ENCODE measurements at regions of chr7 and their contacts with region 1.

Region 1: GRCh38 chr7:38398725-38399321 is 125.4 kb upstream of the TARP start:
- DNase-seq: peak; percentile 15 to 50
- ATAC-seq: peak in 3 of 8 donors; percentile 42 to 68 (median 62)
- H3K4me3 ChIP-seq: no peak overlapping the region
- H3K27ac ChIP-seq: no peak overlapping the region
- H3K4me1 ChIP-seq: peaks cover 0 to 12% (median 0%) of the 10 kb centered on the region in 9 donors
- H3K27me3 ChIP-seq: no peaks in the 10 kb centered on the region
- CTCF ChIP-seq: peak; percentile 76 to 94 (median 92)

Region 2: GRCh38 chr7:38360776-38361175 is 38.0 kb before region 1 on chr7:
- intact Hi-C with region 1: no loop called
- DNase-seq: no peak
- ATAC-seq: no peak
- H3K4me3 ChIP-seq: peak overlapping the region in 1 of 10 donors; percentile 36
- H3K27ac ChIP-seq: no peak overlapping the region
- H3K4me1 ChIP-seq: peaks cover 0 to 20% (median 0%) of the 10 kb centered on the region in 9 donors
- H3K27me3 ChIP-seq: no peaks in the 10 kb centered on the region
- CTCF ChIP-seq: no peak

Region 3: GRCh38 chr7:38492010-38492409 is 93.2 kb after region 1 on chr7:
- intact Hi-C with region 1: no loop called
- DNase-seq: no peak
- ATAC-seq: no peak
- H3K4me3 ChIP-seq: no peak overlapping the region
- H3K27ac ChIP-seq: no peak overlapping the region
- H3K4me1 ChIP-seq: no peaks in the 10 kb centered on the region
- H3K27me3 ChIP-seq: no peaks in the 10 kb centered on the region
- CTCF ChIP-seq: no peak

Region 4: DNA sequence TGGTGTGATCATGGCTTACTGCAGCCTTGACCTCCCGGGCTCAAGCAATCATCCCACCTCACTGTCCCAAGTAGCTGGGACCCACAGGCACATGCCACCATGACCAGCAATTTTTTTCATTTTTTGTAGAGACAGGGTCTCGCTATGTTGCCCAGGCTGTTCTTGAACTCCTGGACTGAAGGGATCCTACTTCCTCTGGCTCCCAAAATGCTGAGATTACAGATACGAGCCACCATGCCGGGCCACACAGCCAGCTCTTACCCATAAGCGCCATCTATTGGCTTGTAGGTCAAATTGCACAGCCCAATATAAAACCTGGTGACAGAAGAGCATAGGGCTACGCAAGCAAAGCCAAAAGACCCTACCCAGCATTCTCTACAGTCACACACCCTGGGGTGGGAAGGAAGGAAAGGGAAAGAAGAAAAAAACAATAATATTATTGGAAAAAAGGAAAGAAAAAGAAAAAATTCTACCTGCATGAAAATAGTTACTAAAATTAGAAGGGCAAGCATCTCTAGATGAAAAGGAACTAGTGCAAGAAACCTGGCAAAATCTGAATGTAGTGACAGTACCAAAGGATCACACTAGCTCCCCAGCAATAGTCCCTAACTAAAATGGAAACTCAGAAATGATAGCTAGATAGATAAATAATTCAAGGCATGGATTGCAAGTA is 261.7 kb after region 1 on chr7:
- intact Hi-C with region 1: loop called in 9 of 10 experiments (anchors 2 to 10 kb)
- DNase-seq: no peak
- ATAC-seq: peak in 4 of 8 donors; percentile 35 to 51 (median 46)
- H3K4me3 ChIP-seq: no peak overlapping the region
- H3K27ac ChIP-seq: no peak overlapping the region
- H3K4me1 ChIP-seq: peaks cover 0 to 32% (median 0%) of the 10 kb centered on the region in 9 donors
- H3K27me3 ChIP-seq: peaks cover 0 to 5% (median 0%) of the 10 kb centered on the region in 7 donors
- CTCF ChIP-seq: peak in 8 of 9 donors; percentile 41 to 76 (median 58)

Region 5: DNA sequence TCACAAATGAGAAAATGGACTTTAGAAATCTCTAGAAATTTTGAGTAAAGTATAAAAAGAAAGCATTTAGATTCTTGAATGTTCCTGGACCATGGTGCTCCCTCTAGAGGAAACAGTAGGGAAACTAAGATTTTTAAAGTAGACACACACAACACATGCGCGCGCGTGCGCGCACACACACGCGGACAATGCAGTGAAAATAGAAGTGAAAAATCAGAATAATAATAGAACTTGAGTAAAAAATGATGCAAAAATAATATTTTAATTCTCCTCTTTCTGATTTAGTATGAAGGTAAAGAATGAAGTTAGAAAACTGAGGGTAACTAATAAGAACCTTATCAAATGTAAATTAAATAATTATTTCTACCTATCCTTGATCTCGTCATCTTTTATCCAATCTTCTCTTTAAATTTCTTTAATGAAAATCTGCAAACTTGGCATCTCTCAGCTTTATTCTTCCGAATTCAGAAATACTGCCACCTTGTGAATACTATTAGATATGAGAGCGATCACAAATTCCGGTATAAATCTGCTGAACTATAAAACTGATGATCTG is 349.3 kb after region 1 on chr7:
- intact Hi-C with region 1: loop called in 2 of 10 experiments (anchors 5 to 10 kb)
- DNase-seq: no peak
- ATAC-seq: no peak
- H3K4me3 ChIP-seq: no peak overlapping the region
- H3K27ac ChIP-seq: no peak overlapping the region
- H3K4me1 ChIP-seq: no peaks in the 10 kb centered on the region
- H3K27me3 ChIP-seq: no peaks in the 10 kb centered on the region
- CTCF ChIP-seq: peak in 7 of 9 donors; percentile 25 to 56 (median 40)

Region 6: GRCh38 chr7:39510864-39511354 is 1112.1 kb after region 1 on chr7:
- intact Hi-C with region 1: loop called in 4 of 10 experiments (anchors 10 kb)
- DNase-seq: no peak
- ATAC-seq: no peak
- H3K4me3 ChIP-seq: no peak overlapping the region
- H3K27ac ChIP-seq: no peak overlapping the region
- H3K4me1 ChIP-seq: no peaks in the 10 kb centered on the region
- H3K27me3 ChIP-seq: peaks cover 0 to 3% (median 0%) of the 10 kb centered on the region in 7 donors
- CTCF ChIP-seq: no peak

Region 7: GRCh38 chr7:39527296-39527695 is 1128.5 kb after region 1 on chr7:
- intact Hi-C with region 1: loop called in 1 of 10 experiments (anchors 5 kb)
- DNase-seq: no peak
- ATAC-seq: no peak
- H3K4me3 ChIP-seq: no peak overlapping the region
- H3K27ac ChIP-seq: no peak overlapping the region
- H3K4me1 ChIP-seq: no peaks in the 10 kb centered on the region
- H3K27me3 ChIP-seq: peaks cover 0 to 7% (median 0%) of the 10 kb centered on the region in 7 donors
- CTCF ChIP-seq: no peak